ENCODE measurements at regions of chr19 and their contacts with region 1.

Region 1: DNA sequence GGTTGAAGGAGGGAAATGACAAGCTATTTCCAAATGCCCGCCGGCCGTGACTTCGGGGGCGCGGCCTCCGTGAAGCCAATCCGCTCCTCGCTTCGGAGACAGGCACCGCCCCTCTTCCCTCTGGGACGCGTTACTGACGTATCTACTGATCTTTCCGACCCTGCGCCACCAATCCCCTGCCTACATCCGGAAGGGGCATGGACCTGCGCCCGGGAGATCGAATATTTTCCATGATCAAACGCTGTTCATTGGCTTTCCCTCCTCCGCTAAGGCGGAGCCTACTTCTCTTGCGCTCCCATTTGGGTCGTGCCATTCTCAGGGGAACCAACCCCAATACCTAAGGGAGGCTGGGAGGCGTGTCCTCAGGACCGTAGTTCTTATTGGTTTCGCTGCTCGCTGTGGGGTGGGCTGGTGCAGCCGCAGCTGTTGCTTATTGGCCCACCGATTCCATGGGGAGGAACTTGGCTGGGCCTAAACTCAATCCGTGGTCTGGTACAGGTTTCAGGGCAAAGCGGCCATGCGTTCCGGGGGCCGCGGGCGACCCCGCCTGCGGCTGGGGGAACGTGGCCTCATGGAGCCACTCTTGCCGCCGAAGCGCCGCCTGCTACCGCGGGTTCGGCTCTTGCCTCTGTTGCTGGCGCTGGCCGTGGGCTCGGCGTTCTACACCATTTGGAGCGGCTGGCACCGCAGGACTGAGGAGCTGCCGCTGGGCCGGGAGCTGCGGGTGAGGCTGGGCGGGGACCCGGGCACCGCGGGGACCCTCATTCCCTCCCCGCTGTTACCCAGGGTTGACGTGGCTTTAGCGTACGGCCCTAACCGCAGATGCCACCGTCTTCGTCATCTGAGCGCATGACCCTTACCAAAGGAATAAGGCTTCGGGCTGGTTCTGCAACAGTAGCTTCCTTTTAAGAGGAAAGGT is at the start of gene QPCTL:
- DNase-seq: peak; percentile 98 to 99
- H3K4me3 ChIP-seq: peak within 1 kb of the TSS; percentile 95
- H3K4me3 Mint-ChIP-seq: peak within 1 kb of the TSS; percentile 83
- H3K27ac Mint-ChIP-seq: peak within 1 kb of the TSS; percentile 93
- H3K4me1 ChIP-seq: peaks cover 4% of the 10 kb centered on the region; the same call in 1 of the 2 replicates
- H3K4me1 Mint-ChIP-seq: no peaks in the 10 kb centered on the region
- H3K27me3 ChIP-seq: no peaks in the 10 kb centered on the region
- H3K27me3 Mint-ChIP-seq: no peaks in the 10 kb centered on the region
- CTCF ChIP-seq: no peak
- total RNA-seq, gene QPCTL: 16.9 and 20.2 TPM in 2 replicates

Region 2: GRCh38 chr19:45515081-45515624 is 177.3 kb before region 1 on chr19:
- CTCF ChIA-PET with region 1: no interaction called
- POLR2A ChIA-PET with region 1: no interaction called
- intact Hi-C with region 1: no loop called
- DNase-seq: no peak
- H3K4me3 ChIP-seq: no peak overlapping the region
- H3K4me3 Mint-ChIP-seq: no peak overlapping the region
- H3K27ac Mint-ChIP-seq: no peak overlapping the region
- H3K4me1 ChIP-seq: peaks cover 17% of the 10 kb centered on the region
- H3K4me1 Mint-ChIP-seq: peaks cover 15% of the 10 kb centered on the region
- H3K27me3 ChIP-seq: no peaks in the 10 kb centered on the region
- H3K27me3 Mint-ChIP-seq: no peaks in the 10 kb centered on the region
- CTCF ChIP-seq: no peak

Region 3: DNA sequence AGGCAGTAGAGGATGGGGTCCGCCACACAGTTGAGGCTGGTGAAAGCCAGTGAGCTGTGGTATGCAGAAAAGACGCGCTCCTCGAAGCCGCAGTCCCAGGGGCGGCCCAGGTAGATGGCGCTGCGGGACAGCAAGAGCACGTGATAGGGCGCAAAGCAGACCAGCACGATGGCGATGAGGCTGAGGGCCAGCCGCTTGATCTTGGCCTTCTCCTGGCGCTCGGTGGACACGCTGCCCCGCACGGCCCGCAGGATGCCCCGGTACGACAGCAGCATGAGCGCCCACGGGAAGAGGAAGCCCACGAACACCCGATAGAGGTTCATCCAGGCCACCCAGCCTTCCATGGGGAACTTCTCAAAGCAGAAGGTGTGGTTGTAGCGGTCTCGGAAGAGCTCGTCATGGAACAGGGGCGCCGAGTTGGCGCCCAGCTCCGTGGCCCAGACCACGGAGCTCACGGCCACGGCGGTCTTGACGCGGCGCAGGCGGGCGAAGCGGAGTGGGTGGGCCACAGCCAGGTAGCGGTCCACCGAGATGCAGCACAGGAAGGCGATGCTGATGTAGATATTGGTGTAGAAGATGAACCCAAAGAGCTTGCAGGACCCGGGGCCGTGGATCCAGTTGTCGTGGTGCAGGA is 101.3 kb before region 1 on chr19:
- CTCF ChIA-PET with region 1: interaction called, 13 read pairs
- POLR2A ChIA-PET with region 1: no interaction called
- intact Hi-C with region 1: no loop called
- DNase-seq: peak; percentile 83 to 85
- H3K4me3 ChIP-seq: peak overlapping the region; percentile 13; the same call in 1 of the 2 replicates
- H3K4me3 Mint-ChIP-seq: peak overlapping the region; percentile 43
- H3K27ac Mint-ChIP-seq: no peak overlapping the region
- H3K4me1 ChIP-seq: peaks cover 4% of the 10 kb centered on the region
- H3K4me1 Mint-ChIP-seq: peaks cover 7% of the 10 kb centered on the region
- H3K27me3 ChIP-seq: no peaks in the 10 kb centered on the region
- H3K27me3 Mint-ChIP-seq: peaks cover 18% of the 10 kb centered on the region
- CTCF ChIP-seq: peak; percentile 75 to 88

Region 4: DNA sequence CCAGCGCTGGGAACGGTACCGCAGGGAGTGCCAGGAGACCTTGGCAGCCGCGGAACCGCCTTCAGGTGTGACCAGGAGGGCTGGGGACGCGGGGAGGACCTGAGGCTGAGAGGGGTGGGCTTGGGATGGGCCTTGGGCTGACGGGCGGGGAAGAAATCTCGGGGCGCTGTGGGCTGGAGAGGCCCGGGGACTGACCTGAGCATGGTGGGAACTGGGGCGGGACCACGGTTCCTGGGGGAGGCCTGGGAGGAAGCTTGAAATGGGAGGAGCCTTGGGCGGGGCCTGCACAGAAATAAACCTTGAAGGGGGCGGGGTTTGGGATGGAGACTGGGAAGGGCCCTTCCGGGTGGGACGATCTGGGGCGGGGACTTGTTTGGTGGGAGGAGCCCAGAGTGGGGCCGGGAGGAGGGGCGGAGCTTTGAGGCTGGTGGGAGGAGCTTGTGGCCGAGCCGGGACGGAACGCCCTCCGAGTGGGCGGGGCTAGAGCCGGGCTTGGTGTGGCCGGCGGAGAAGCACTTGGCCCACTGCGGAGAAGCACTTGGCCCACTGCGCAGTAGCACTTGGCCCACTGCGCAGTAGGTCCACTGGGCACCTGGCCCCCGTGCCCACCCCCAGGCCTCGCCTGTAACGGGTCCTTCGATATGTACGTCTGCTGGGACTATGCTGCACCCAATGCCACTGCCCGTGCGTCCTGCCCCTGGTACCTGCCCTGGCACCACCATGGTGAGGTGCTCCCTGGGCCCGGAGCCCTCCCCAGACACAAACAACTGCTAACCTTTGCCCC is 21.6 kb before region 1 on chr19:
- CTCF ChIA-PET with region 1: interaction called, 14 read pairs
- POLR2A ChIA-PET with region 1: interaction called, 3 read pairs
- intact Hi-C with region 1: no loop called
- DNase-seq: peak; percentile 74 to 80
- H3K4me3 ChIP-seq: no peak overlapping the region
- H3K4me3 Mint-ChIP-seq: peak overlapping the region; percentile 85
- H3K27ac Mint-ChIP-seq: peak overlapping the region; percentile 19
- H3K4me1 ChIP-seq: no peaks in the 10 kb centered on the region
- H3K4me1 Mint-ChIP-seq: peaks cover 8% of the 10 kb centered on the region
- H3K27me3 ChIP-seq: no peaks in the 10 kb centered on the region
- H3K27me3 Mint-ChIP-seq: no peaks in the 10 kb centered on the region
- CTCF ChIP-seq: no peak

Region 5: GRCh38 chr19:45717166-45717982 is 24.9 kb after region 1 on chr19:
- CTCF ChIA-PET with region 1: interaction called, 34 read pairs
- POLR2A ChIA-PET with region 1: interaction called, 56 read pairs
- intact Hi-C with region 1: loop called (anchors 1 kb)
- DNase-seq: peak; percentile 99 to 100
- H3K4me3 ChIP-seq: peak overlapping the region; percentile 64
- H3K4me3 Mint-ChIP-seq: peak overlapping the region; percentile 95
- H3K27ac Mint-ChIP-seq: peak overlapping the region; percentile 96
- H3K4me1 ChIP-seq: peaks cover 14% of the 10 kb centered on the region
- H3K4me1 Mint-ChIP-seq: peaks cover 19% of the 10 kb centered on the region
- H3K27me3 ChIP-seq: no peaks in the 10 kb centered on the region
- H3K27me3 Mint-ChIP-seq: no peaks in the 10 kb centered on the region
- CTCF ChIP-seq: peak in 1 of 2 experiments; percentile 26

Region 6: GRCh38 chr19:45730389-45731288 is 38.2 kb after region 1 on chr19 and contains the start of gene FBXO46:
- CTCF ChIA-PET with region 1: interaction called, 14 read pairs
- POLR2A ChIA-PET with region 1: interaction called, 6 read pairs
- intact Hi-C with region 1: no loop called
- DNase-seq: peak; percentile 97 to 99
- H3K4me3 ChIP-seq: peak within 1 kb of the TSS; percentile 57
- H3K4me3 Mint-ChIP-seq: peak within 1 kb of the TSS; percentile 86
- H3K27ac Mint-ChIP-seq: peak within 1 kb of the TSS; percentile 73
- H3K4me1 ChIP-seq: peaks cover under 1% of the 10 kb centered on the region
- H3K4me1 Mint-ChIP-seq: peaks cover 8% of the 10 kb centered on the region
- H3K27me3 ChIP-seq: no peaks in the 10 kb centered on the region
- H3K27me3 Mint-ChIP-seq: no peaks in the 10 kb centered on the region
- CTCF ChIP-seq: peak in 1 of 2 experiments; percentile 44
- total RNA-seq, gene FBXO46: 31.0 and 37.0 TPM in 2 replicates

Region 7: DNA sequence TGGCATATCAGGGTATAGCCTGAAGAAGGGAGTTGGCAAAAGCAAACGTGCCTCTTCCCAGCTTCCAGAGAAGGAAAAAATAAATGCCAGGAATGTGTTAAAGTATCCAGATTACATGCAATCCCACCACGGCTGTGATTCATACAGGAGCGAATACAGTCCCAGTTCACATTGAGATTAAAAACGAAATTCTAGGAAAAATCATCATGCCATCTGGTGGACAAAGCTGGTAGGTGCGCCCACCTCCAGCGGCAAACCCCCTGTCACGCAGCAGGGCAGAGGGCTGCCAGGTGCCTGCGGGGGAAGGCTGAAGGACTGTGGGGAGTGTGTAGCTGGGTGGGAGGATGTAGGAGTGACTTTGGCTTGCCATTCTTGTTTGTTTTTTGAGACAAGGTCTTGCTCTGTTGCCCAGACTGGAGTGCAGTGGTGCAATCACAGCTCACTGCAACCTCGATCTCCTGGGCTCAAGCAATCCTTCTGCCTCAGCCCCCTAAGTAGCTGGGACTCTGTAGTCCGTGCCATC is 106.6 kb after region 1 on chr19:
- CTCF ChIA-PET with region 1: no interaction called
- POLR2A ChIA-PET with region 1: no interaction called
- intact Hi-C with region 1: no loop called
- DNase-seq: peak in 1 of 2 experiments; percentile 79
- H3K4me3 ChIP-seq: no peak overlapping the region
- H3K4me3 Mint-ChIP-seq: peak overlapping the region; percentile 4
- H3K27ac Mint-ChIP-seq: no peak overlapping the region
- H3K4me1 ChIP-seq: no peaks in the 10 kb centered on the region
- H3K4me1 Mint-ChIP-seq: peaks cover 6% of the 10 kb centered on the region
- H3K27me3 ChIP-seq: no peaks in the 10 kb centered on the region
- H3K27me3 Mint-ChIP-seq: no peaks in the 10 kb centered on the region
- CTCF ChIP-seq: peak; percentile 76 to 85